Mammary epithelial cell (primary cell): ENCODE measurements at regions of chr6 and their contacts with region 1.

Region 1: GRCh38 chr6:155943635-155944034 is 488.0 kb upstream of the NOX3 start:
- DNase-seq: no peak
- H3K4me3 ChIP-seq: no peak overlapping the region
- H3K27ac ChIP-seq: no peak overlapping the region
- H3K4me1 ChIP-seq: no peaks in the 10 kb centered on the region
- H3K27me3 ChIP-seq: no peaks in the 10 kb centered on the region
- CTCF ChIP-seq: no peak

Region 2: GRCh38 chr6:155970876-155971708 is 27.5 kb after region 1 on chr6:
- CTCF ChIA-PET with region 1: no interaction called
- dilution Hi-C with region 1: no loop called
- in situ Hi-C with region 1: no loop called
- intact Hi-C with region 1: no loop called
- DNase-seq: no peak
- H3K4me3 ChIP-seq: no peak overlapping the region
- H3K27ac ChIP-seq: no peak overlapping the region
- H3K4me1 ChIP-seq: no peaks in the 10 kb centered on the region
- H3K27me3 ChIP-seq: no peaks in the 10 kb centered on the region
- CTCF ChIP-seq: no peak

Region 3: GRCh38 chr6:156080371-156080770 is 136.7 kb after region 1 on chr6:
- CTCF ChIA-PET with region 1: no interaction called
- dilution Hi-C with region 1: loop called (anchors 10 kb)
- in situ Hi-C with region 1: no loop called
- intact Hi-C with region 1: no loop called
- DNase-seq: no peak
- H3K4me3 ChIP-seq: no peak overlapping the region
- H3K27ac ChIP-seq: no peak overlapping the region
- H3K4me1 ChIP-seq: no peaks in the 10 kb centered on the region
- H3K27me3 ChIP-seq: no peaks in the 10 kb centered on the region
- CTCF ChIP-seq: no peak